ENCODE measurements at regions of chr10 and their contacts with region 1.

Region 1: GRCh38 chr10:68792115-68792514 is 35.2 kb upstream of the STOX1 start:
- DNase-seq: no peak
- H3K4me3 ChIP-seq: no peak overlapping the region
- H3K27ac ChIP-seq: no peak overlapping the region
- H3K4me1 ChIP-seq: no peaks in the 10 kb centered on the region
- H3K27me3 ChIP-seq: no peaks in the 10 kb centered on the region
- CTCF ChIP-seq: peak in 1 of 7 experiments; percentile 7
- EP300 ChIP-seq: no peak
- POLR2A ChIP-seq: no peak

Region 2: GRCh38 chr10:68586606-68587305 is 205.4 kb before region 1 on chr10:
- intact Hi-C with region 1: no loop called
- DNase-seq: no peak
- H3K4me3 ChIP-seq: no peak overlapping the region
- H3K27ac ChIP-seq: no peak overlapping the region
- H3K4me1 ChIP-seq: peaks cover 0 to 4% (median 0%) of the 10 kb centered on the region in 4 donors
- H3K27me3 ChIP-seq: no peaks in the 10 kb centered on the region
- CTCF ChIP-seq: no peak
- EP300 ChIP-seq: no peak
- POLR2A ChIP-seq: no peak

Region 3: DNA sequence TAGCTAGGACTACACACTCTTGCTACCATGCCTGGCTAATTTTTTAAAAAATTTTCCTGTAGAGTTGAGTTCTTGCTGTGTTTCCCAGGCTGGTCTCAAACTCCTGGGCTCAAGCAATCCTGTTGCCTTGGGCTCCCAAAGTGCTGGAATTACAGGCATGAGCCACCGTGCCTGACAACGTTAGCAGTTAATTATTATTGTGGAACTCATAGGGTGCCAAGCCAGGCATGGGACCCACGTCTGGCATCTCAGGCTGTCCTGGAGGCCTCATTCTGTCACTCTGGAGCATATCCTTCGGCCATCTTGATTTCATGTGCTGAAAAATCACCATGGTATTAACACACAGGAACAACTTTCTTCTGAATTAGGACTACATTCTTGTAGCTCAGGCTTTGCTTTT is 56.7 kb after region 1 on chr10:
- intact Hi-C with region 1: no loop called
- DNase-seq: no peak
- H3K4me3 ChIP-seq: no peak overlapping the region
- H3K27ac ChIP-seq: no peak overlapping the region
- H3K4me1 ChIP-seq: no peaks in the 10 kb centered on the region
- H3K27me3 ChIP-seq: no peaks in the 10 kb centered on the region
- CTCF ChIP-seq: no peak
- EP300 ChIP-seq: no peak
- POLR2A ChIP-seq: no peak

Region 4: DNA sequence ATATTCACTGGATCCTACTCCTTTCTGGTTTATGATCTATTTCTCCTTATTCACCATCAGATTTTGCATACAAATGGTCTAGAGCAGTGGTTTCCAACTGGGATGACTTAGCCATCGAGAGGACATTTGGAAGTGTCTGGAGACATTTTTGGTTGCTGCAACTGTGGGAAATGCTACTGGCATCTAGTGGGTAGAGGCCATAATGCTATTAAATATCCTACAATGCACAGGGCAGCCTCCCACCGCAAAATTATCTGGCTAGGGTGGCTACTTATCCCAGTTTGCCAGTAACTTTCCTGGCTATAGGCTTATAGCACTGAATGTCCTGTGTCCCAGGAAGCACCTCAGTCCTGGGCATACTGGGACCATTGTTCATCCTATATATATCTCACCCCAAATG is 87.5 kb after region 1 on chr10:
- intact Hi-C with region 1: loop called (anchors 10 kb)
- DNase-seq: no peak
- H3K4me3 ChIP-seq: no peak overlapping the region
- H3K27ac ChIP-seq: no peak overlapping the region
- H3K4me1 ChIP-seq: peaks cover 6 to 41% (median 20%) of the 10 kb centered on the region in 4 donors
- H3K27me3 ChIP-seq: no peaks in the 10 kb centered on the region
- CTCF ChIP-seq: no peak
- EP300 ChIP-seq: no peak
- POLR2A ChIP-seq: no peak

Region 5: GRCh38 chr10:68973975-68974374 is 181.9 kb after region 1 on chr10:
- intact Hi-C with region 1: no loop called
- DNase-seq: no peak
- H3K4me3 ChIP-seq: no peak overlapping the region
- H3K27ac ChIP-seq: no peak overlapping the region
- H3K4me1 ChIP-seq: no peaks in the 10 kb centered on the region
- H3K27me3 ChIP-seq: no peaks in the 10 kb centered on the region
- CTCF ChIP-seq: no peak
- EP300 ChIP-seq: no peak
- POLR2A ChIP-seq: no peak

Measured in stomach (tissue), 19 donors.